Activated CD4-positive, alpha-beta T cell treated with anti-CD3 and anti-CD28 coated beads for 36 hours (primary cell): ENCODE measurements at regions of chr19 and their contacts with region 1.

Region 1: GRCh38 chr19:49869441-49870176 is 2.2 kb upstream of the PNKP start:
- DNase-seq: peak; percentile 94
- ATAC-seq: peak; percentile 87
- H3K4me3 Mint-ChIP-seq: no peak overlapping the region
- H3K27ac Mint-ChIP-seq: no peak overlapping the region
- H3K4me1 Mint-ChIP-seq: peaks cover 39% of the 10 kb centered on the region
- H3K27me3 Mint-ChIP-seq: no peaks in the 10 kb centered on the region

Region 2: DNA sequence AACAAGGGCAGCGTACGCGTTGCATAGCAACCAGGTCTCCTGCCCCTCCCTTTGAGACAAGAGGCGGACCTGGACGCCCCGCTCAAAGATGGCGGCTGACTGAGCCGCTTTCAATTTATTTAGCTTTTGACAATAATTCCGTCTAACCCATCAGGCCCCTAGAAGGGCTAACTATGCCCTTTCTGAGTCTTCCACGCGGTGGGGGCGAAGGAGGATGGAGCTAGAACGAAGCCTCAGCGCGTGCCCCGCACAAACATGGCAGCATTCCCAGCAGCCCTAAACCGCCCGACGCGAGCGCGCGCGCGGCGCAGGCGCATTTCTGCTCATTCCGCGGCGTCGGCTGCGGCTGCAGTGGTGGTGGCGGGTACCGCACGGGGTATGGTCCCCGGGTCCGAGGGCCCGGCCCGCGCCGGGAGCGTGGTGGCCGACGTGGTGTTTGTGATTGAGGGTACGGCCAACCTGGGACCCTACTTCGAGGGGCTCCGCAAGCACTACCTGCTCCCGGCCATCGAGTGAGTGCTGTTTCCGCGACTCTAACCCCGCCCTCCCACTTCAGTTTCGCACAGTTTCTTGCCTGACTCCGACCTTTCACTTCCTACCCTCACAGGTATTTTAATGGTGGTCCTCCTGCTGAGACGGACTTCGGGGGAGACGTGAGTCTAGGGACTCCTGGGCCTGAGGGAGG is 51.5 kb before region 1 on chr19 and contains the start of gene MED25:
- CTCF ChIA-PET with region 1: interaction called, 3 read pairs
- POLR2A ChIA-PET with region 1: no interaction called
- intact Hi-C with region 1: loop called (anchors 1 to 2 kb)
- DNase-seq: peak; percentile 91
- ATAC-seq: peak; percentile 75
- H3K4me3 Mint-ChIP-seq: peak within 1 kb of the TSS; percentile 87
- H3K27ac Mint-ChIP-seq: peak within 1 kb of the TSS; percentile 99
- H3K4me1 Mint-ChIP-seq: peaks cover 26% of the 10 kb centered on the region
- H3K27me3 Mint-ChIP-seq: no peaks in the 10 kb centered on the region
- total RNA-seq, gene MED25: 39.6 to 49.9 TPM

Region 3: DNA sequence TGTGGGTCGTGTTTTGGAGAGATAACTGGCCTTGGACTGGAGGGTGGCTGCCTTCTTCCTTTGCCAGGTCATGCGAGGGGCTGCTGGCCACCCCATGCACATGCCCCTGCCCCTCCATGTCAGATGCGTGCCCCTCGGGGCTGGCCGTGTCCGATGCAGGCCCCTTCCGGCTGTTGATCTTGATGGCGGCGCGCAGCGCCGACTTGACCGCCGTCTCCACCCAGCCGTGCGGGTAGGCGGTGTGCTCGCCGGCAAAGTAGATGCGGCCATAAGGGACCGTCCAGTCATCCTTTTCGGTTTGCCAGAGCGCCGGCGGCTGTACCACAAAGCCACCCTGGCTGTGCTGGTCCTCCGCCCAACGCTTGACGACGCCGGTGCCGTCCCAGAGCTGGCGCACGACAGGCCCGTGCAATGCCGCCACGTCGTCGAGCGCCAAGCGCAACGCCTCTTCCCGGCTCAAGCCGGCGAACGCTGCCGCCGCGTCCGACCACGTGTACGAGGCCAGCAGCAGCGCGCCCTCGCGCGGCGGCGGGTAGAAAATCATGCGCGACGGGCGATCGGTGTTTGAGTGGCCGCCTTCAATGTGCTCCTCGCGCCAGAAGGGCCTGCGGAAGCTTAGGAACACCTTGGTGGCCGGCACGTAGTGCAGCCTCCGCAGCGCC is 20.2 kb after region 1 on chr19:
- CTCF ChIA-PET with region 1: interaction called, 4 read pairs
- POLR2A ChIA-PET with region 1: no interaction called
- intact Hi-C with region 1: loop called in 1 of 2 experiments (anchors 1 kb)
- DNase-seq: peak; percentile 89
- ATAC-seq: peak; percentile 61
- H3K4me3 Mint-ChIP-seq: peak overlapping the region; percentile 69
- H3K27ac Mint-ChIP-seq: peak overlapping the region; percentile 70
- H3K4me1 Mint-ChIP-seq: peaks cover 16% of the 10 kb centered on the region
- H3K27me3 Mint-ChIP-seq: no peaks in the 10 kb centered on the region

Region 4: DNA sequence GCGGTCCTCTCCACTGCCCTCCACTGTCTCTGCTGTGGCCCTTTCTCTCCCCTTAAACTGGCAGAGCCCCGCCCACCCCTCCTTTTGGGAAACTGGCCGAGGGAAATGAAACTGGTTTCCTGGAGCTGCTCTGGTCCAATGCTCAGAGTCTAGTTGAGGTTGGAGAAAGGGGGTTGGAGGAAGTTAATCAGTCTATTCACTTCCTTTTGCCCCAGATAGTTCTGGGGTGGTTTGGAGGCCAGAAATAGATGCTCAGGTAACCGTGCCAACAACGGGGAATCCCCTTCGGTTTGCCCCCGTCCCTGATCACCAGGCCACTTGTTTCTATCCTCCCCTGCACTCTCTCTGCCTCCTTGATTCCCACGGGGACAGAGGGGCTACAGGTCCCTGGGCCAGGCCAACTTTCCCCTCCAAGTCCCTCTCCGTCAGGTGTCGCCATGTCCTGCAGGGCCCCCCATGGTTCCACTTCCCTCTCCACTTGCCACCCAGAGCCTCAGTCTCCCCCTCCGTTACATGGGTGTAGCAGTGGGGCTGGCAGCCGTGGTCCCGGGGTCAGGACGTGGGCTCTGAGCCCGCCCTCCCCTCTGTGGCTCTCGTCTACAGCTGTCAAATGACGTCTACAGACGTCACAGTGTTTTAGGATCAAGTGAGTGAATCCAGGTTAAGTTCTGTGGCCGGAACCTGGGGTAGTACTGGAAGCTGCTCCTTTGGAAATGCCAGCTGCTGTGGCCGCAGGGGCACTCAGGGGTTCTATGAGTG is 27.4 kb after region 1 on chr19 and contains the start of gene IL4I1:
- CTCF ChIA-PET with region 1: interaction called, 4 read pairs
- POLR2A ChIA-PET with region 1: interaction called, 4 read pairs
- intact Hi-C with region 1: loop called in 1 of 2 experiments (anchors 1 kb)
- DNase-seq: peak; percentile 79
- ATAC-seq: peak; percentile 65
- H3K4me3 Mint-ChIP-seq: peak within 1 kb of the TSS; percentile 70
- H3K27ac Mint-ChIP-seq: peak within 1 kb of the TSS; percentile 95
- H3K4me1 Mint-ChIP-seq: peaks cover 49% of the 10 kb centered on the region
- H3K27me3 Mint-ChIP-seq: no peaks in the 10 kb centered on the region
- total RNA-seq, gene IL4I1: 21.2 to 22.2 TPM